Psoas muscle (tissue), 8 donors: ENCODE measurements at regions of chr5 and their contacts with region 1.

Region 1: DNA sequence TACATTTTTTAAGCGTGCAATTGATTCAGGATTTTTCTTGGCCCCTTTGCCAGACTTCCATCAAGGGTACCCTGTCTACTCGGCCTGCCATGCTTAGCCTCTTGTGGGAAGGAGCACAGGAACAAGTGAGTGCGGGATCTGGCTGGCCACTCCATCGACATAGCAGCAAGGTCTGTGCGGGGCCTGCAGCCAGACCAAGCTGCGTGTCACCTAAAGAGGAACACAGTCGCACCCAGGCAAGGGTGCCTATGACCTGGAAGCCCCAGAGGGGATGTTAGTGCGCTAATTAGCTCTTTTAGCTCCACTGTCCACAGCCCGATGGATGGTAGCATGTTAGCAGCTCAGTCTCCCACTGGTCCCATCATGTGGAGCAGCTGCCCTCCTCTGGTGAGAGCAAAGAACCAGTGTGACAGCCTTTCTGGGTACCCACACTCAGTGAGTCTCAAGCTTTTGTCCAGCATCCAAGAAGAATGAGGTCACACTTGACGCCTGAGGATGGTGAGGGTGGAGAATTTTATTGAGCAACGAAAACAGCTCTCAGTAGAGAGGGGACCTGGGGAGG is 38.7 kb downstream of the FTMT start:
- DNase-seq: peak in 1 of 2 donors; percentile 41
- ATAC-seq: no peak
- H3K4me3 ChIP-seq: no peak overlapping the region
- H3K27ac ChIP-seq: no peak overlapping the region
- H3K4me1 ChIP-seq: no peaks in the 10 kb centered on the region
- H3K27me3 ChIP-seq: no peaks in the 10 kb centered on the region
- CTCF ChIP-seq: no peak

Region 2: GRCh38 chr5:120730214-120730613 is 1160.2 kb before region 1 on chr5:
- intact Hi-C with region 1: no loop called
- DNase-seq: no peak
- ATAC-seq: no peak
- H3K4me3 ChIP-seq: no peak overlapping the region
- H3K27ac ChIP-seq: no peak overlapping the region
- H3K4me1 ChIP-seq: no peaks in the 10 kb centered on the region
- H3K27me3 ChIP-seq: no peaks in the 10 kb centered on the region
- CTCF ChIP-seq: no peak

Region 3: GRCh38 chr5:121658221-121658620 is 232.2 kb before region 1 on chr5:
- intact Hi-C with region 1: loop called in 1 of 2 experiments (anchors 10 kb)
- DNase-seq: no peak
- ATAC-seq: no peak
- H3K4me3 ChIP-seq: no peak overlapping the region
- H3K27ac ChIP-seq: no peak overlapping the region
- H3K4me1 ChIP-seq: no peaks in the 10 kb centered on the region
- H3K27me3 ChIP-seq: no peaks in the 10 kb centered on the region
- CTCF ChIP-seq: no peak

Region 4: GRCh38 chr5:121668635-121669034 is 221.7 kb before region 1 on chr5:
- intact Hi-C with region 1: no loop called
- DNase-seq: no peak
- ATAC-seq: no peak
- H3K4me3 ChIP-seq: no peak overlapping the region
- H3K27ac ChIP-seq: no peak overlapping the region
- H3K4me1 ChIP-seq: no peaks in the 10 kb centered on the region
- H3K27me3 ChIP-seq: no peaks in the 10 kb centered on the region
- CTCF ChIP-seq: no peak

Region 5: GRCh38 chr5:121805911-121806310 is 84.5 kb before region 1 on chr5:
- intact Hi-C with region 1: no loop called
- DNase-seq: no peak
- ATAC-seq: no peak
- H3K4me3 ChIP-seq: no peak overlapping the region
- H3K27ac ChIP-seq: no peak overlapping the region
- H3K4me1 ChIP-seq: no peaks in the 10 kb centered on the region
- H3K27me3 ChIP-seq: no peaks in the 10 kb centered on the region
- CTCF ChIP-seq: no peak